Activated T-helper 2 cell treated with anti-CD3 and anti-CD28 coated beads, Interferon-gamma antibody, Interleukin-2, Interleukin-4, amounts not matched to agents 10 μg/mL and 5 μg/mL and 100 μg/mL, durations not matched to agents 14 hours and 24 hours and 36 hours (primary cell): ENCODE measurements at regions of chr22 and their contacts with region 1.

Region 1: DNA sequence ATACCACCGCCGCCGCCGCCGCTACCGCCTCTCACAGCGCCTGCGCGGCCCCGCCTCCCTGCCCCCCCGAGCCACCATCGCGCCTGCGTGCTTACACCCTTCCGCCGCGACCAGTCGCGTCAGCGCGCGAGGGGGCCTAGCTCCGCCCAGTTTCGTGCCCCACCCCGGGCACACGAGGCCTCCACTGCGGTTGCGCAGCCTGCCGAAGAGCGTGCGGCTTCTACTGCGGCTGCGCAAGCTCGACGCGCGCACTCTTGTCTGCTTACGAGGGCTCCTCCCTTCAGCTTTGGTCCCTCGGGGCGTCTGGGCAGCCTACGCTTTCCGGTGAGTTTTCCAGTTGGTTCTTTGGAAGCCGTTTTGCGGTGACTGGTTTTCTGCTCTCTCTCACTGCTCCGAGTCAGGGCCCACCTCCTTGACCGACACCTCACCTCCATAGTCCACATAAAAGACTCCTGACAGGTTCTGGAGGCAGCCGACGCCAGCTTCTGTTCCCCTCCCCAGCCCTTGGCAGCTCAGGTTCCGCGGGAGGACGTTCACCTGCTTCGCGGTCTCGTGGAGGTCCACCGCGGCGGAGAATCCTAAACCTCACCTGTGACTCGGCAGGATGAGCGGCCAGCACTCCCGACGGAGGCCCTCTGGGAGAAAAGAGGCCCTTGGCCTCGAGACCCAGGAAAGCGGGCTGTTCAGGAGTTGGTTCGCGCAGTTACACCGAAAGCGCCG is at the start of gene PITPNB:
- DNase-seq: peak; percentile 98
- H3K4me3 Mint-ChIP-seq: peak within 1 kb of the TSS; percentile 93
- H3K27ac Mint-ChIP-seq: peak within 1 kb of the TSS; percentile 97
- H3K4me1 Mint-ChIP-seq: peaks cover 47% of the 10 kb centered on the region
- H3K27me3 Mint-ChIP-seq: no peaks in the 10 kb centered on the region
- total RNA-seq, gene PITPNB: 138 and 142 TPM in 2 replicates

Region 2: DNA sequence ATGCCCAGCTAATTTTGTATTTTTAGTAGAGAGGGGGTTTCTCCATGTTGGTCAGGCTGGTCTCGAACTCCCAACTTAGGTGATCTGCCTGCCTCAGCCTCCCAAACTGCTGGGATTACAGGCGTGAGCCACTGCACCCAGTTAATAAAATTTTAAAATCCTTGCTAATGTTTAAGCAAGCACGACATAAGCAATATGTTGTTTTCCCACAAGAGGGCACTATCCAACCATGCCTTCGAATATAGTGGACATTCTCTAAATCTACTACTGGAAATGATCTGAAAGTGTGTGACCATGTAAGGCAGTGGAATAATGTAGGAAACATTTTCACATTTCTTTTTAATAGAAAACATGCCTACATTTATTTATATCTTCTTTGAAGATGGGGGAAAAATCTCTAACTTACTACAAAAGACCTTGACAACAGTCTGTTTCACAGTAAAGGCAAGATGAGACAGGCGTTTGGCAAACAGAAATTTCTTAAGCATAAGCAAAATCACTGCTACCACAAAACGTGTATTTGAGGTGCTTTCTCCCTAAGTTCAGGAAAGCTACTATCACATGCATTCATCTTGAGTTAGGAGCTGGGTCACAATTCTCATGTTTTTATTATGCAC is 38.5 kb before region 1 on chr22:
- intact Hi-C with region 1: loop called (anchors 5 kb)
- DNase-seq: no peak
- H3K4me3 Mint-ChIP-seq: no peak overlapping the region
- H3K27ac Mint-ChIP-seq: peak overlapping the region; percentile 38
- H3K4me1 Mint-ChIP-seq: peaks cover 22% of the 10 kb centered on the region
- H3K27me3 Mint-ChIP-seq: no peaks in the 10 kb centered on the region

Region 3: DNA sequence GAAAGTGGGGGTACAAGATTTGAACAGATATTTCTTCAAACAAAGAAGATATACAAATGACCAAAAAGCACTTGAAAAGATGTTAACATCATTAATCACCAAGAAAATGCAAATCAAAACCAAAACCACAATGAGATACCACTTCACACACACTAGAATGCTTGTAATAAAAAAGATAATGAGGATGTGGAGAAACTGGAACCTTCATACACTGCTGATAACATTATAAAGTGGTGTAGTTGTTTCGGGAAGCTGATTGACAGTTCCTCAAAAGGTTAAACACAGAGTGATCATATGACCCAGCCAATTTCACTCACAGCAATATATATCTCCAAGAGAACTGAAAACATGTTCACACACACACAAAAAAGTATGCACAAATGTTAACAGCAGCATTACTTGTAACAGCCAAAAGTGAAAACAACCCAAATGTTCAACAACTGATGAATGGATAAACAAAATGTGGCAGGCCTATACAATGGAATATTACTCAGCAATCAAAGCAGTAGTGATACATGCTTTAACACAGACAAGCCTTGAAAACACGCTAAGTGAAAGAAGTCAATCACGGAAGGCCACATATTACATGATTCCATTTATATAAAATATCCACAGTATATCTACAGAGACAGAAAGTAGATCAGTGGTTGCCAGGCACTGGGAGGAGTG is 15.4 kb before region 1 on chr22:
- intact Hi-C with region 1: loop called (anchors 2 kb)
- DNase-seq: no peak
- H3K4me3 Mint-ChIP-seq: peak overlapping the region; percentile 51
- H3K27ac Mint-ChIP-seq: peak overlapping the region; percentile 83
- H3K4me1 Mint-ChIP-seq: peaks cover 43% of the 10 kb centered on the region
- H3K27me3 Mint-ChIP-seq: no peaks in the 10 kb centered on the region

Region 4: GRCh38 chr22:28054819-28055208 is 135.4 kb after region 1 on chr22:
- intact Hi-C with region 1: no loop called
- DNase-seq: no peak
- H3K4me3 Mint-ChIP-seq: no peak overlapping the region
- H3K27ac Mint-ChIP-seq: no peak overlapping the region
- H3K4me1 Mint-ChIP-seq: no peaks in the 10 kb centered on the region
- H3K27me3 Mint-ChIP-seq: peaks cover 6% of the 10 kb centered on the region

Region 5: DNA sequence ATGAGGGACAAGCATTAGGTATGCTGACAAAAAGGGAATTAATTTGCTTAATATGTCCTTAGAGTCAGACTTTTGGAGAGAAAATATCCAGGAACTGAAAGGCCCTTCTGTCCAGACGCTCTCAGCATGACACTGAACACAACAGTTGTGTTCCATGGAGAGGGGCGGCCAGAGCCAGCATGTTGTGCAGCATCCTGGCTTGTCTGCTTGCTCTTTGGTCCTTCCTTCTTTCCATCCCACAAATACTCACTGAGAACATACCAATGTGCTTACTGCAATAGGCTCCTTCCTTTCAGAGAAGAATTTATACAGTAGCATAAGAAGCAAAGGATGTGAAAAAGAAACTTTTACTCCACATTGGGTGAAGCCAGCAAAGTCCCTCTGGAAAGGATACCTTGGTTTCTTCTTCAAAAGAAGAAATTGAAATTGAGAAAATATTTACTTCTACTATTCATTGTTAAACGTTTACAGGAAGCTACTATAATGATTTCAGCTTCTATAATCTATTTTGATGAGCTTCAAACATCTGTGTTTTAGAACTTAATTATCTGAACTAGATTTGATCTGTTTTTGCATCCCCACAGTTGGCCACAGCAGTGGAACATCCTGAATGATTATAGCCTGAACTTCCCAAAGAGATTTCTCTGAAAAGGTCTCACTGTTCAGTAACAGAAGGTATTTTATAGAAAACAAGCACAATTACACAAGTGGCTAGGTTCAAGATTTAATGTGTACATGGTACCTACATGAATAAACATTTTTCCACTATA is 303.8 kb after region 1 on chr22:
- intact Hi-C with region 1: no loop called
- DNase-seq: no peak
- H3K4me3 Mint-ChIP-seq: no peak overlapping the region
- H3K27ac Mint-ChIP-seq: no peak overlapping the region
- H3K4me1 Mint-ChIP-seq: no peaks in the 10 kb centered on the region
- H3K27me3 Mint-ChIP-seq: peaks cover 2% of the 10 kb centered on the region